ENCODE measurements at regions of chr9 and their contacts with region 1.

Region 1: DNA sequence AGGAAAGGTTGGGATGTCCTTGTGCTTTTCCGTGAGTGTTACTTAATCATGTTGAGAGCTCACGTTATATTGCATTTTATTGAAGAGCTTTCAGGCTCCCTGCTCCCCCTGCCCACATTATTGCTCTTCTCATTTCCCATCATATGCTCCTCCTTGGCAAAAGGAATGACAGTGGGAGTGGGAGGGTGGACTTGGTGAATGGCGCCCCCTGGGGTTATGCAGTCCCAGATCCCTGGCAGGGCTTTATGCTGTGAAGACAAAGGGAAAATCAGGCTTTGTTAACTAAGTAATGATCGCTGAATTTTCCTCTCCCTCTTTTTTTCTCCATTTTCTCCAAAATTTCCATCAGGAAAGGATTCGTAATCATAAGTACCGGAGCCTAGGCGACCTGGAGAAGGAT is 166.6 kb downstream of the SMARCA2 start:
- DNase-seq: no peak
- H3K4me3 ChIP-seq: no peak overlapping the region
- H3K27ac ChIP-seq: no peak overlapping the region
- H3K4me1 ChIP-seq: peaks cover 0 to 16% (median 5%) of the 10 kb centered on the region in 4 donors
- H3K27me3 ChIP-seq: no peaks in the 10 kb centered on the region
- CTCF ChIP-seq: peak in 2 of 4 experiments; percentile 18 to 26
- EP300 ChIP-seq: no peak
- POLR2A ChIP-seq: no peak

Region 2: GRCh38 chr9:2132484-2133082 is 49.2 kb before region 1 on chr9:
- intact Hi-C with region 1: loop called (anchors 5 kb)
- DNase-seq: no peak
- H3K4me3 ChIP-seq: no peak overlapping the region
- H3K27ac ChIP-seq: no peak overlapping the region
- H3K4me1 ChIP-seq: peaks cover 0 to 59% (median 30%) of the 10 kb centered on the region in 4 donors
- H3K27me3 ChIP-seq: no peaks in the 10 kb centered on the region
- CTCF ChIP-seq: peak in 3 of 4 experiments; percentile 53 to 83 (median 68)
- EP300 ChIP-seq: no peak
- POLR2A ChIP-seq: no peak